Astrocyte of the cerebellum (primary cell): ENCODE measurements at regions of chr17 and their contacts with region 1.

Region 1: DNA sequence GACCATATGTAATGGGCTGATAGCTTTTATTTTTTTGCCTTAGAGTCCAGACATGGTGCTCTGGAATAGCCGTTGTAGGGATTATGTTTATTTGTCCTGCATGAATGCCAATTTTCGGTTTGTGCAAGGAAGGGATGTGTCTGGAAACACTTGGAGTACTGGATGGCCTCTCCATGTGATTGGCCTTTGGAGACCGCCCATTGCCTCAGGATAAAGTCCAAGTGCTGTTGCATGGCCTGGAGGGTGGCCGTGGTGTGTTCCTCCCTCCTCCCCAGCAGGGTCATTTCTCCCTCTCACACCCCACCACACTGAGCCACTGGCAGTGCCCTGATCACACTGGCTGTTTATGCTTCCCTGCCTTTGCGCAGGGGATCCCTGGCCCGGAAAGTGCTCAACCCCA is 94.0 kb downstream of the MSI2 start:
- DNase-seq: no peak
- H3K4me3 ChIP-seq: no peak overlapping the region
- CTCF ChIP-seq: no peak

Region 2: DNA sequence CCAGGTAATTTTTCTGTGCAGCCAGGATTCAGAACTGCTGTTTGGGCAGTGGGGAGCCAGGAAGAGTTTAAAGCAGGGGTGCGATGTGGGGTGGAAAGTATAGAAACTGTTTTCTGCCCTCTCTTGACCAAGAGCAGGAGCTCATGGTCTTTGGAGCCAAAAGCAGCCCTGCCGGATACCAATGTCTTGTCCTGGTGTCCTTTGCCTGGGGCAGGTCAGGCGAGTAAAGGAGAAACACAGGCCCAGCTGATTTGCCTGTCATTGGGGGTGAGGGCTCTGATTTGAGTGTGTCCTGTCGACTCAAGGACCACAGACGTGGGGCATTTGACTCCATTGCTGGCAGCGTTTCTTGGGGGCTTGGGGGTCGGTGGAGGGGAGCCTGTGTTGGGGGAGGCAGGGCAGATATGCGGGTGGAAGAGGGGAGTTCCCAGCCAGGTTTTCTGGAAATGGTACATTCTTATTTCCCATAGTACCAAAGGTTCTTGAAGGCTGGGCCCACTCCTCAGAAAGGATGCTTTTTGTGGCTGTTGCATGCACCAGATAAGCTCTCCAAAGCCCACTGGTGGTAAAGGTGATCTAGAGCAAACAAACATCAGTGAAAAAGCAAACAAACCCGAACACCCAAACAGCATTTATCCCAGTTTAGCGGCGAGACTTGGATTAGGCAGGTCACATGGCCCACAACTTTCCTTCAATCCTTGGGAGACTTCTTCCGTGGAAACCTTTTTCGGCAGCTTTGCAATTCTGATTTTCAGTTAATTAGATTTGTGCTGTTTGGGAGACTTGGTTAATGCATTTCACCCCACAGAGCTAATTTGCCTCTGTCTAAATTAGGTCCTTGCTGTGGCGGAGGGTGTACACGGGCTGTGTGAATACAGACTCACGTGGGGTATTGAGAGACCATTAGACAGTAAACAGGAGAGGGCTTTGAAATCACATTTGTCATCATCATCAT is 34.9 kb before region 1 on chr17:
- in situ Hi-C with region 1: loop called (anchors 5 kb)
- DNase-seq: no peak
- H3K4me3 ChIP-seq: no peak overlapping the region
- CTCF ChIP-seq: no peak

Region 3: GRCh38 chr17:57396511-57396921 is 46.2 kb after region 1 on chr17:
- in situ Hi-C with region 1: no loop called
- DNase-seq: no peak
- H3K4me3 ChIP-seq: no peak overlapping the region
- CTCF ChIP-seq: no peak

Region 4: DNA sequence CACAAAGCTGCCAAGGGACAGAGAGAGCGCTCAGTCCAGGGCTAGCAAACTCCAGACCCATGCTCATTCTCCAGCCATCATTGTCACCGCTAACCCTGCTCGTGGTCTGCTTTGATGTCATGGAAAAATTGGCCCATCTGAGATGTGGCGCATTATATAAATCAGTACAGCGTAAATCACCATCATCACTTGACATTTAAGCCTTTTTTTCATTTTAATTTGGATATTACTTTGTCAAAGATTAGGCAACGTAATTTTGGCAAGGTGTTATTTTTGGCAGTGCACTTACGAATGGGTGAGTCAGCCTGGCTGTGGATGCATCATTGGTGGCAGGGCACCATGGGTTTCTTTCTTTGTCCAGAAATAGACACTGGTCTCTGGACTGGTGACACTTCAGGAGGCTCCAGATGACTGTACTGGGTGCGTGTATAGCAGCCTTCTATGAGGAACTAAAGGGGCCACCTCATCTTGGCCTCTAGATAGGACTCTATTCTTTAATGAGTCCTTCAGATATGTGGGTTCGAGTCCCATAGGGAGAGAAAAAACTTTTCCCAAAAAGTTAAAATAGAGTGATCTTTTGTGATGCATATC is 72.4 kb after region 1 on chr17:
- in situ Hi-C with region 1: no loop called
- DNase-seq: no peak
- H3K4me3 ChIP-seq: no peak overlapping the region
- CTCF ChIP-seq: no peak